Mammary epithelial cell (primary cell): ENCODE measurements at regions of chrX and their contacts with region 1.

Region 1: DNA sequence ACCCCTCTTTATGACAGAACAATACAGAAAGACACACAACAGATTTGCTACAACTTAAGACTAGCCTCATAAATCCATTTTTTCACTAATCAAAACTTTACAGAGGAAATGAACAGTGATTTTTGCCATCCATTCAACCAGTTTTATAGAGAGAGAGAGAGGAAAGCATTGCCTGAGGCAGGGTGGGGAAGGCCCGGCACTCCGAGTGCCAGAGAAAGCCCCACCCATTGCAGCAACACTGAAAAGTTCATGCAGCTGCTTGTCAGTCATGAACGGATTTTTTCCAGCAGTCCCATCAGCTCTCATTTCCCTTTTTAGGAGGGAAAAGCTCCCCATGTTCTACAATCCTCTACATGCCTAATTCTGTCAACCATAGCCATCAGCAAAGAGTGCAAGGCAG is 236.9 kb downstream of the CHIC1 start:
- DNase-seq: peak; percentile 24
- H3K4me3 ChIP-seq: no peak overlapping the region
- H3K27ac ChIP-seq: no peak overlapping the region
- H3K4me1 ChIP-seq: no peaks in the 10 kb centered on the region
- H3K27me3 ChIP-seq: peaks cover 2% of the 10 kb centered on the region
- CTCF ChIP-seq: no peak

Region 2: GRCh38 chrX:73785493-73785892 is 14.4 kb before region 1 on chrX:
- CTCF ChIA-PET with region 1: no interaction called
- dilution Hi-C with region 1: no loop called
- in situ Hi-C with region 1: no loop called
- intact Hi-C with region 1: loop called (anchors 2 kb)
- DNase-seq: no peak
- H3K4me3 ChIP-seq: no peak overlapping the region
- H3K27ac ChIP-seq: no peak overlapping the region
- H3K4me1 ChIP-seq: no peaks in the 10 kb centered on the region
- H3K27me3 ChIP-seq: peaks cover under 1% of the 10 kb centered on the region
- CTCF ChIP-seq: no peak

Region 3: GRCh38 chrX:74090049-74090448 is 290.2 kb after region 1 on chrX:
- CTCF ChIA-PET with region 1: no interaction called
- dilution Hi-C with region 1: no loop called
- in situ Hi-C with region 1: no loop called
- intact Hi-C with region 1: no loop called
- DNase-seq: no peak
- H3K4me3 ChIP-seq: no peak overlapping the region
- H3K27ac ChIP-seq: no peak overlapping the region
- H3K4me1 ChIP-seq: no peaks in the 10 kb centered on the region
- H3K27me3 ChIP-seq: no peaks in the 10 kb centered on the region
- CTCF ChIP-seq: no peak